Cardiac septum (tissue), 1 donor: ENCODE measurements at regions of chr1 and their contacts with region 1.

Region 1: GRCh38 chr1:206635080-206635977 is at the start of gene DYRK3:
- DNase-seq: peak; percentile 98
- total RNA-seq, gene DYRK3: 11.3 TPM

Region 2: DNA sequence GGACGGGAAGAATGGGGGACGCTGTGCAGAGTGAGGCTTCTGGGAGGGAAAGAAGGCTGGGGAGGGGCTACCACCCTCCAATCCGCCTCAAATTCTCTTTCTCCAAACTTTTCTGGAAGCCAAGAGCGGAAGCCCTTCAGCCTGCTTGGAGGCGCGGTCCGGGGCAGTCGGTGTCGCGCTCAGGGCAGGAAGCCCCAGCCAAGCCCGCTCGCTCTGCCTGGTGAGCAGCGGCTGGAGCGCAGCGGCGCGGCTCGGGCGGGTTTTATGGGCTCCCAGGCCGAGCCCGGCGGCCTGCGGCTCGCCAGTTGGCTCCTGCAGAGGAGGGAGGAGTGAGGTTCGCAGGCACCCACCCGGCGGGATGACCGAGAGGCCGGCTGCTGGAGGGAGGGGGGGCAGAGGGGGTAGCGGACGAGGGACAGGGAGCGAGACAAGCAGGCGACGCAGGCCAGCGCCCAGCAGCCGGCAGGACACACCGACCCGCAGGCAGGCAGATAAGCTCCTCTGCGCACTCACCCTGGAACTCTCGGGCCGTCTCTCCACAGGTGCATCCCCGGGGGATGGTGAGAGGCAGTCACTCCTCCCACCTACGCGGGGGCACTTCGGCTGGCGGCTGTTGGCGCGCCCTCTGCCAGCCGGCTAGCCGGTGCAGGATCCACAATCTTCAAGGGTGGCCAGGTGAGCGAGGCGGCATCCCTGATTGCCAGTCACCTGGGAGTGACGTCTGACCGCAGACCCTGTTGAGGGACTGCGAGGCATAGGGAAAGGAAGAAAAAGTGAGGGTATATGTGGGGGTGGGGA is 518.0 kb before region 1 on chr1 and contains the start of gene AVPR1B:
- intact Hi-C with region 1: no loop called
- DNase-seq: no peak
- total RNA-seq, gene AVPR1B: not detected

Region 3: GRCh38 chr1:206658264-206658980 is 23.1 kb after region 1 on chr1:
- intact Hi-C with region 1: loop called (anchors 2 kb)
- DNase-seq: peak; percentile 85

Region 4: DNA sequence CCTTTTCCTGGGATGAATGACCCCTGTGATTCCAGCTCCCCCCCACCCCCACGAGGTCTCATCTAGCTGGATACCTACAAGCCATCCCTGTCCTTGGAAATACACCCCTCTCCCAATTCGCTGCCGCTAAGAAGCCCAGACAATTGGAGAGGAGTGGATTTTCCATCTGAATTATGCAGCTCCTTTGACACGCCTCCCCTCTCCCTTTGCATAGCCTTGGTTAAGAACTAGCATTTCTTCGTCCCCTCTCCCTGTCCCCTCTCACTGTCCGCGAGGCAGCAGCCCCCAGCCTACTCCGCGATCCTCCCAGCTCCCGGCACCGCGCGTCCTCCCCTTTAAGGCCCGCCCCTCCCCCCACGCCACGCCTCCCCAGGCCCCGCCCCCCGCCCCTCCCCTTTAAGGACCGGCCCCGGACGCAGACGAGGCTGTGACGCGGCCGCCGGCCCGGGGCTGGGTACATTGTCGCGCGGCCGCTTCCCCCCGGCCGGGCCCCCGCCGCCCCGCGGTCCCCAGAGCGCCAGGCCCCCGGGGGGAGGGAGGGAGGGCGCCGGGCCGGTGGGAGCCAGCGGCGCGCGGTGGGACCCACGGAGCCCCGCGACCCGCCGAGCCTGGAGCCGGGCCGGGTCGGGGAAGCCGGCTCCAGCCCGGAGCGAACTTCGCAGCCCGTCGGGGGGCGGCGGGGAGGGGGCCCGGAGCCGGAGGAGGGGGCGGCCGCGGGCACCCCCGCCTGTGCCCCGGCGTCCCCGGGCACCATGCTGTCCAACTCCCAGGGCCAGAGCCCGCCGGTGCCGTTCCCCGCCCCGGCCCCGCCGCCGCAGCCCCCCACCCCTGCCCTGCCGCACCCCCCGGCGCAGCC is 49.4 kb after region 1 on chr1 and contains the start of gene MAPKAPK2:
- intact Hi-C with region 1: loop called (anchors 2 kb)
- DNase-seq: peak; percentile 94
- total RNA-seq, gene MAPKAPK2: 242 TPM

Region 5: DNA sequence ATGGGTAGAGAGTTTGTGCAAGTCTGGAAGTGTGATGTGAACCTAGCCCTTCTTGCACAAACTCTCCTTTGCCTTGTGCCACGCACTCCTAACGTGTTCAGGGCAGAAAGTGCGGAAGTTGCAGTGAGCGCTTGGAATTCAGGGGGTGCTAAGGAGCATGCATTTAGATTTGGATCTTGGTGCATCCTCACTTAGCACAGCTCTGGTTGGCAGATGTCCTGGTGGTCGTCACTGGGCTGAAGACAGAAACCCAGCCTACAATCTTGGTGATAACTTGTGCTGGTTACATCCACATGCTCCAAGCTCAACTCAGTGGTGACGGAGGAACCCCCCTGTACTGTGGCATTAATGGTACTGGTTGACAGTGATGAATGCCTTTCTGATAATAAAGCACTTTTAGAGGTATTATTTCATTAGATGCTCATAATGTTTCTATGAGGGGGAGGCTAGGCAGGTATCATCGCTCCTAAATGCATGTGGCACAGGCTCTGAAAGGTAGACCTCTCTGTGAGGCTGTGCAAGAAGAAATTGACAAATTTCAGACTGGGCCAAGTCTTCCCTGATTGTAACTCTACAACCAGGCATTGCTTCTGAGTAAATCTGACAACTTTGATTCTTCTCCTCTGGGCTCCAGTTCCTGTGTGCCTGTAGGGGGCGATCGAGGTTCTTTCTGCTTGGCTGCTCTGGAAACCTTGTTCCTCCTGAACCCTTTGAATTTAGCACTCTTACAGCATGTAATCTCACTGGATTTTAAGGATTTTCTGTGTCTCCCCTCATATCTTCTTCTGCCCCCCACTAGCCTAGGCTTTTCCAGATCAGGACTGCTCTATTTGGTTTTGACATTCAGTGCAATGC is 90.0 kb after region 1 on chr1:
- intact Hi-C with region 1: loop called (anchors 5 kb)
- DNase-seq: no peak

Region 6: DNA sequence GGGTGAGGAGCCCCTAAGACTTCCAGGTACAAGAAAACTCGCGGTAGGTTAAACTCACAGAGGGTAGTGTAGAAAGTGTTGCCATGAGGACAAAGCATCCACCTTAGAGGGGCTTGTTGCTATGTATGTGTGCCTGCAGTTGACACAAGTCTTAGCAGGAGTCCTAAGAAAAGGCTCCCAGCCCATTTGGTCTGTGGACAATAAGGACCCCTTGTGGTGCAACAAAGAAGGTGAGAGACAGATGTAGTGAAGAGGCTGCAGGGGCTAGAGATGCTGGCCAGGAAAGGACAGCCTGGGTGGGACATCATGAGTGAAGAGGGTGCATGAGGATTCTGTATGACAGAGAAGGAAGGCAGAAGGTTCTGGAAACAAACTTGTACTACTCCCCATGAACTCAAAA is 173.3 kb after region 1 on chr1:
- intact Hi-C with region 1: loop called (anchors 1 kb)
- DNase-seq: no peak

Region 7: GRCh38 chr1:206982216-206982615 is 346.9 kb after region 1 on chr1:
- intact Hi-C with region 1: loop called (anchors 5 kb)
- DNase-seq: no peak